PC-9 (cell line): ENCODE measurements at regions of chr1 and their contacts with region 1.

Region 1: DNA sequence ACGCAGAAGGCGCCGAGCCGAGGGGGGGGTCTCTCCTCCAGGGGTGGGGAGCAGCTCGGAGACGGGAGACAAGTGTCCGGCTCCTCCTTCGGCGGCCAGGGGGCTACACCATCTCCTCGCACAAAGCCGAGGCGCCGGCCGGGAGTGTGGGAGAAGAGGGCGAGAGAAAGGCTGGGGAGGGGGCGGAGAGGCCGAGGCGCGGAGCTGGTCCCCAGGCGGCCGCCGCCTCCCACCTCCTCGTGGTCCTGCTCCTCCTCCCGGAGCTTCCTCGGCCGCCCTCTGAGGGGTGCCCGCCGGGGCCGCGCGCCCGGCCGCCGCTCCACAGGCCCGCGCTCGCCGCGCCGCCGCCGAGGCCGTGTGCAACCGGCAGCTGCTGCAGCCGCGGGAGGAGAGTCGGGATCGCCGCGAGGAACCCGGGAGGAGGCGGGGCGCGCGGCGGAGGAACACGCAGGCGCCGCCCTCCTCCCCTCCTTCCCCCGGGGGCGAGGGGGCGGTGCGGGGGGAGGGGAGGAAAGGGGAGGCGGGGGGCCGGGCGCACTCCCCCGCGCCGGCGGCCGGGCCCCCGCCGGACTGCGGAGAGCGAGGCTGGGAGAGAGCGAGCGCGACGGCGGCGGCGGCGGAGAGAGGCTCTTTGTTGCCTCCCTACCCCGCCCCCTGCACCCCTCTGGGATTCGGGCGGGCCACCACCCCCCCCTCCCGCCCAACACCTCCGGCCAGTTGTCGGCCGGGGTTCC is at the start of gene ENAH:
- DNase-seq: peak; percentile 48 to 90
- H3K4me3 ChIP-seq: peak within 1 kb of the TSS; percentile 92
- H3K27ac ChIP-seq: peak within 1 kb of the TSS; percentile 89
- H3K4me1 ChIP-seq: peaks cover 65% of the 10 kb centered on the region
- H3K27me3 ChIP-seq: no peaks in the 10 kb centered on the region
- CTCF ChIP-seq: no peak
- total RNA-seq, gene ENAH: 118 and 167 TPM in 2 replicates

Region 2: GRCh38 chr1:225480825-225481434 is 172.0 kb before region 1 on chr1:
- CTCF ChIA-PET with region 1: no interaction called
- POLR2A ChIA-PET with region 1: no interaction called
- intact Hi-C with region 1: loop called (anchors 5 kb)
- DNase-seq: peak; percentile 59 to 81
- H3K4me3 ChIP-seq: no peak overlapping the region
- H3K27ac ChIP-seq: no peak overlapping the region
- H3K4me1 ChIP-seq: no peaks in the 10 kb centered on the region
- H3K27me3 ChIP-seq: no peaks in the 10 kb centered on the region
- CTCF ChIP-seq: peak; percentile 94

Region 3: DNA sequence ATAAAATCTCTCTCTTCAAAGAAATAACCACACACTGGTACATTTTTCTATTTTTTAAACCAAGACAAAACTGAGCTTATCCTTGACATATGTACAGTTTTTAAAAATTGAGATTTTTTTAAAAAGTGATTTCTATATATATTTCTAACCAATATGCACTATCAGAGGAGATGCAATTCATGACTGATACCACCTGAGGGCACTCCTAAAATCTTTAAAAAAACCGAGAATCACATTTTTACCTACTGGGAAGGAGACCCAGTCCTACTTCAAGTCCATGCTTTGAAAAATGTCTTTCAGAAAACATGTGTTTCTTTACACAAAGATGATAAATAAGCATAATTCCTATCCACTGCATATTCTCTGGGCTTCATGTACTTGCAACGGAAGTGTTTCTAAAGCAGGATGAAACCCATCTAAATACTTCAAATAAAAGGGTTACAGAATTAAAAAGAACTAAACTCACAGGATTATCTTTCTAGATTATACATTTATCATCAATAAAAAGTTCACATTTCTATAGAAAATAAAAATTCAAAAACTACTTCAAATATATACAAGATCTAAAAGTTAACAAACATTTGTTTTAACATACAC is 98.6 kb before region 1 on chr1:
- CTCF ChIA-PET with region 1: interaction called, 3 read pairs
- POLR2A ChIA-PET with region 1: interaction called, 4 read pairs
- intact Hi-C with region 1: loop called (anchors 2 kb)
- DNase-seq: no peak
- H3K4me3 ChIP-seq: no peak overlapping the region
- H3K27ac ChIP-seq: 0 out of 2 replicates have a peak overlapping the region, but pooled peaks have one; percentile 25
- H3K4me1 ChIP-seq: no peaks in the 10 kb centered on the region
- H3K27me3 ChIP-seq: no peaks in the 10 kb centered on the region
- CTCF ChIP-seq: peak; percentile 78

Region 4: GRCh38 chr1:225617479-225617878 is 35.4 kb before region 1 on chr1:
- CTCF ChIA-PET with region 1: no interaction called
- POLR2A ChIA-PET with region 1: interaction called, 17 read pairs
- intact Hi-C with region 1: loop called (anchors 5 kb)
- DNase-seq: no peak
- H3K4me3 ChIP-seq: no peak overlapping the region
- H3K27ac ChIP-seq: peak overlapping the region; percentile 24; the same call in 1 of the 2 replicates
- H3K4me1 ChIP-seq: peaks cover 12% of the 10 kb centered on the region
- H3K27me3 ChIP-seq: no peaks in the 10 kb centered on the region
- CTCF ChIP-seq: no peak

Region 5: GRCh38 chr1:225735252-225736149 is 82.6 kb after region 1 on chr1:
- CTCF ChIA-PET with region 1: no interaction called
- POLR2A ChIA-PET with region 1: interaction called, 13 read pairs
- intact Hi-C with region 1: loop called (anchors 1 kb)
- DNase-seq: peak; percentile 79 to 90
- H3K4me3 ChIP-seq: peak overlapping the region; percentile 18; the same call in 1 of the 2 replicates
- H3K27ac ChIP-seq: peak overlapping the region; percentile 86
- H3K4me1 ChIP-seq: peaks cover 63% of the 10 kb centered on the region
- H3K27me3 ChIP-seq: no peaks in the 10 kb centered on the region
- CTCF ChIP-seq: no peak

Region 6: GRCh38 chr1:225772323-225772768 is 119.5 kb after region 1 on chr1:
- CTCF ChIA-PET with region 1: interaction called, 5 read pairs
- POLR2A ChIA-PET with region 1: interaction called, 7 read pairs
- intact Hi-C with region 1: loop called (anchors 1 kb)
- DNase-seq: peak; percentile 91 to 94
- H3K4me3 ChIP-seq: no peak overlapping the region
- H3K27ac ChIP-seq: peak overlapping the region; percentile 45
- H3K4me1 ChIP-seq: peaks cover 51% of the 10 kb centered on the region
- H3K27me3 ChIP-seq: no peaks in the 10 kb centered on the region
- CTCF ChIP-seq: peak; percentile 90